Activated CD4-positive, alpha-beta memory T cell treated with anti-CD3 and anti-CD28 coated beads for 36 hours (primary cell): ENCODE measurements at regions of chr3 and their contacts with region 1.

Region 1: DNA sequence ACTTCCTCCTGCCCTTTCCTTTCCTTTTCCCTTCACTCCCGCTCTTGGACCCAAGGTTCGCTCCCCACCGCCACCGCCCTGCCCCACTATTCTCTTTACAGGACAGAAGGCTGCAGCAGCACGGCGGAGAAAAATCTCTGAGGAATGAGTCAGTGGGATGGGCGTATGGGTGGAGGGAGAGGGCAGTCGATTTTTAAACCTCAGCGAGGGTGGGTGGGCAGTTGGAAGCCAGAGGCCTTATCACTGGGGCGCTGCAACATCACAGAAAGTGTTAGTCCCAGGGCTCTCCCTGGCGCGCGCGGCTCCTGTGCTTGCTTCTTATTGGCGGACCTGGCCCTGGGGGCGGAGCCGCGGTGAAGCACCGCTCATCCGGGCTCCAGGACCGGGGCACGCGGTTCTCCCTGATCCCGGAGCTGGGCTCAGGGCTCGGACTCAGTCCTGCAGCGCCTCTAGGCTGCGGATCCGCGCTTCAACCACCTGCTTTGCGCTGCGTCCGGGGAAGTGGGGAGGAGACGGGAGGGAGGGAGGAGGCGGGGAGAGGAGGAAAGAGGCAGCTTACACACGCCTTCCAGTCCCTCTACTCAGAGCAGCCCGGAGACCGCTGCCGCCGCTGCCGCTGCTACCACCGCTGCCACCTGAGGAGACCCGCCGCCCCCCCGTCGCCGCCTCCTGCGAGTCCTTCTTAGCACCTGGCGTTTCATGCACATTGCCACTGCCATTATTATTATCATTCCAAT is at the start of gene ALCAM:
- DNase-seq: peak; percentile 91
- H3K4me3 Mint-ChIP-seq: peak within 1 kb of the TSS; percentile 84
- H3K27ac Mint-ChIP-seq: peak within 1 kb of the TSS; percentile 97
- H3K4me1 Mint-ChIP-seq: peaks cover 28% of the 10 kb centered on the region
- H3K27me3 Mint-ChIP-seq: peaks cover 24% of the 10 kb centered on the region
- total RNA-seq, gene ALCAM: 20.3 to 20.6 TPM

Region 2: DNA sequence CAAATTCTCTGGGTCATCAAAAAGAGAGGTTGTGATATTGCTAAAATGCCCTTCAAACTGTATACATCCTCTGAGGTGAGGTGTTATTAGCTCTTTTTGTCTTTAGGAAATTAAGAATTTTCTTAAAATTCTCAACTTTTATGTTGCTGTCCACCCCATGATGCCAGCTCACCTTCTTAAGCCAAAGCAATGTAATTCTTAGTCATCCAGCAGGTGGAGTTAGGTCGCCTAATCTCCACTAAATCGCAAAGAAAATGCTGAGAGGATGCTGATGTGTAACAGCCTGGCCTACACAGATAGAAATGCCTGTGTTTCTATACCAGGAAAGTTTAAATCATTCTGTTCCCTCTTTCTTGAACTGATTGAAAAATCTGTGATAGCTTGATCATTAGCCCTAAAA is 769.9 kb before region 1 on chr3:
- CTCF ChIA-PET with region 1: interaction called, 11 read pairs
- POLR2A ChIA-PET with region 1: no interaction called
- intact Hi-C with region 1: loop called (anchors 2 kb)
- DNase-seq: no peak
- H3K4me3 Mint-ChIP-seq: no peak overlapping the region
- H3K27ac Mint-ChIP-seq: no peak overlapping the region
- H3K4me1 Mint-ChIP-seq: no peaks in the 10 kb centered on the region
- H3K27me3 Mint-ChIP-seq: no peaks in the 10 kb centered on the region

Region 3: GRCh38 chr3:105676621-105677300 is 310.3 kb after region 1 on chr3:
- CTCF ChIA-PET with region 1: no interaction called
- POLR2A ChIA-PET with region 1: no interaction called
- intact Hi-C with region 1: loop called (anchors 1 kb)
- DNase-seq: peak; percentile 77
- H3K4me3 Mint-ChIP-seq: no peak overlapping the region
- H3K27ac Mint-ChIP-seq: peak overlapping the region; percentile 86
- H3K4me1 Mint-ChIP-seq: peaks cover 9% of the 10 kb centered on the region
- H3K27me3 Mint-ChIP-seq: no peaks in the 10 kb centered on the region

Region 4: DNA sequence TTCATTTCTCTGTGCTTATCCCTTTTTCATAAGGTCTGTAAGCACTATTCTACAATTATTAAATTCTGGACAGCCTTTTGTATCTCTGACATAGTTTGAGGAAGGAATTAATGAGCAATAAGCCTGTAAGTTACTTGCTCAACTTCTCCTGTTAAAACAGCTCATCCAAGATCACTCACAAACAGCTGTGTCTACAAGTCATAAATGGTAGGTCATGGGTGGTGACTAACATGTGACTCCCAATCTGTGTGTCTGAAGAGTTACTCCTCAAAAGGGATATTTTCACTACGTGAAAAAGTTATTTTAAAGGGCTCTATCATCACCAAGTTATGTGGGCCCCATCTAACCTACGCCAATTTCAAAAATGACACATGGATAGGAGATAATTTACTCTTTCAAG is 647.5 kb after region 1 on chr3:
- CTCF ChIA-PET with region 1: no interaction called
- POLR2A ChIA-PET with region 1: no interaction called
- intact Hi-C with region 1: loop called (anchors 5 kb)
- DNase-seq: no peak
- H3K4me3 Mint-ChIP-seq: no peak overlapping the region
- H3K27ac Mint-ChIP-seq: peak overlapping the region; percentile 30
- H3K4me1 Mint-ChIP-seq: peaks cover 41% of the 10 kb centered on the region
- H3K27me3 Mint-ChIP-seq: no peaks in the 10 kb centered on the region

Region 5: GRCh38 chr3:106299300-106300098 is 933.0 kb after region 1 on chr3:
- CTCF ChIA-PET with region 1: no interaction called
- POLR2A ChIA-PET with region 1: no interaction called
- intact Hi-C with region 1: loop called (anchors 10 kb)
- DNase-seq: peak; percentile 30
- H3K4me3 Mint-ChIP-seq: no peak overlapping the region
- H3K27ac Mint-ChIP-seq: peak overlapping the region; percentile 53
- H3K4me1 Mint-ChIP-seq: peaks cover 50% of the 10 kb centered on the region
- H3K27me3 Mint-ChIP-seq: no peaks in the 10 kb centered on the region

Region 6: DNA sequence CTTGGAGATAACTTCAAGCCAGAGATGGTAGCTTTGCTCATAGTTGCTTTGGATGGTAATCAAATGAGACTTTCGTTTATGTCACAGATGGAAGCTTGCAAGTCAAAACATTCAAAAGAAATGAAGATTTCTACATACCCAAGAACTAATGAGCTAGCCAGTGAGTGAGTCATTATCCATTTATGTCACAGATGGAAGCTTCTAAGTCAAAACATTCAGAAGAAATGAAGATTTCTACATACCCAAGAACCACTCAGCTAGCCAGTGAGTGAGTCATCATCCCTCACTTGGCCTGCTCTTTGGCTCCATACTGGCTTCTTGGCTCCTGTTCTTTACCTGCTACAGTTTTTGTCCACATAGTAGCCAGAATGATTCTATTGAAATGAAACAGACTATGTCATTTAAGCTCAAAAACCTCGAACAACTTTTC is 1062.1 kb after region 1 on chr3:
- CTCF ChIA-PET with region 1: no interaction called
- POLR2A ChIA-PET with region 1: interaction called, 4 read pairs
- intact Hi-C with region 1: loop called (anchors 1 kb)
- DNase-seq: peak; percentile 72
- H3K4me3 Mint-ChIP-seq: no peak overlapping the region
- H3K27ac Mint-ChIP-seq: peak overlapping the region; percentile 99
- H3K4me1 Mint-ChIP-seq: peaks cover 53% of the 10 kb centered on the region
- H3K27me3 Mint-ChIP-seq: no peaks in the 10 kb centered on the region